PC-9 (cell line): ENCODE measurements at regions of chr2 and their contacts with region 1.

Region 1: DNA sequence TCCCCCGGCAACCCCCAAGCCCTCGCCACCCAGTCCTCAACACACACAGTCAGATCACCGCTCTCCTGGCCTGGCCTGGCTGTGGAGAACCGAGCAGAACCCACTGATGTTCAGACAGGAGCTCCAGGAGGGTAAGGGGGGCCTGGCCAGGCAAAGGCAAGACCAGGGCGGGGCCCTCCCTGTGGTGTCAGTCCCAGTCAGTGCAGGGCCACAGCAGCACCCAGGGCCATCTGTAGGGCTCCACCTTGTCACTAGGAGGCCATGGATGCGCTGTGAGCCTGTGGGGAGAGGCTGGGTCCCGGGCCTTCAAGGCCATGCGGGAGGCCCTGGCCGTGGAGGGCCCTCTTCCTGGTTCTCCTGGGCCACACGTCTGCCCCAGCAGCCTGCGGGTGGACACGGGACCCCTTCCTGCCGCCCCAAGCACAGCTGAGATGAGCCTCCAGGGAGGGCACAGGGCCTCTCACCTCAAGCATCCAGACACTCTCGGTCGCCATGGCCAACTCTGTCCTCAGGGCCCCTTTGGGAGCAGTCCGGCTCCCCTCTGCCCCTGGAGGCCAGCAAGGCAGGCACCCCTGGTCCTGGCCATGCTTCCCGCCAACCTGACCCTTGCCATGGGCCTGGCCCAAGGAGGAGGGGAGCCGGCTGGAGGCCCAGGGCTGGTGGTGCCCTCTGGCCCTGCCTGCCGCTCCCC is 2.0 kb downstream of the ANO7 start:
- DNase-seq: no peak
- H3K4me3 ChIP-seq: no peak overlapping the region
- H3K27ac ChIP-seq: no peak overlapping the region
- H3K4me1 ChIP-seq: no peaks in the 10 kb centered on the region
- H3K27me3 ChIP-seq: peaks cover 42% of the 10 kb centered on the region
- CTCF ChIP-seq: no peak

Region 2: GRCh38 chr2:240749516-240749915 is 440.9 kb before region 1 on chr2:
- CTCF ChIA-PET with region 1: no interaction called
- POLR2A ChIA-PET with region 1: interaction called, 20 read pairs
- intact Hi-C with region 1: no loop called
- DNase-seq: no peak
- H3K4me3 ChIP-seq: no peak overlapping the region
- H3K27ac ChIP-seq: no peak overlapping the region
- H3K4me1 ChIP-seq: no peaks in the 10 kb centered on the region
- H3K27me3 ChIP-seq: peaks cover 98% of the 10 kb centered on the region
- CTCF ChIP-seq: no peak

Region 3: GRCh38 chr2:240780023-240780700 is 410.3 kb before region 1 on chr2:
- CTCF ChIA-PET with region 1: no interaction called
- POLR2A ChIA-PET with region 1: no interaction called
- intact Hi-C with region 1: no loop called
- DNase-seq: no peak
- H3K4me3 ChIP-seq: no peak overlapping the region
- H3K27ac ChIP-seq: no peak overlapping the region
- H3K4me1 ChIP-seq: no peaks in the 10 kb centered on the region
- H3K27me3 ChIP-seq: peaks cover 62% of the 10 kb centered on the region
- CTCF ChIP-seq: no peak

Region 4: GRCh38 chr2:240881913-240882312 is 308.5 kb before region 1 on chr2:
- CTCF ChIA-PET with region 1: no interaction called
- POLR2A ChIA-PET with region 1: no interaction called
- intact Hi-C with region 1: no loop called
- DNase-seq: no peak
- H3K4me3 ChIP-seq: no peak overlapping the region
- H3K27ac ChIP-seq: no peak overlapping the region
- H3K4me1 ChIP-seq: no peaks in the 10 kb centered on the region
- H3K27me3 ChIP-seq: no peaks in the 10 kb centered on the region
- CTCF ChIP-seq: no peak

Region 5: GRCh38 chr2:241061275-241061674 is 129.2 kb before region 1 on chr2:
- CTCF ChIA-PET with region 1: no interaction called
- POLR2A ChIA-PET with region 1: no interaction called
- intact Hi-C with region 1: no loop called
- DNase-seq: peak in 1 of 2 experiments; percentile 86
- H3K4me3 ChIP-seq: no peak overlapping the region
- H3K27ac ChIP-seq: no peak overlapping the region
- H3K4me1 ChIP-seq: peaks cover 7% of the 10 kb centered on the region
- H3K27me3 ChIP-seq: no peaks in the 10 kb centered on the region
- CTCF ChIP-seq: no peak

Region 6: DNA sequence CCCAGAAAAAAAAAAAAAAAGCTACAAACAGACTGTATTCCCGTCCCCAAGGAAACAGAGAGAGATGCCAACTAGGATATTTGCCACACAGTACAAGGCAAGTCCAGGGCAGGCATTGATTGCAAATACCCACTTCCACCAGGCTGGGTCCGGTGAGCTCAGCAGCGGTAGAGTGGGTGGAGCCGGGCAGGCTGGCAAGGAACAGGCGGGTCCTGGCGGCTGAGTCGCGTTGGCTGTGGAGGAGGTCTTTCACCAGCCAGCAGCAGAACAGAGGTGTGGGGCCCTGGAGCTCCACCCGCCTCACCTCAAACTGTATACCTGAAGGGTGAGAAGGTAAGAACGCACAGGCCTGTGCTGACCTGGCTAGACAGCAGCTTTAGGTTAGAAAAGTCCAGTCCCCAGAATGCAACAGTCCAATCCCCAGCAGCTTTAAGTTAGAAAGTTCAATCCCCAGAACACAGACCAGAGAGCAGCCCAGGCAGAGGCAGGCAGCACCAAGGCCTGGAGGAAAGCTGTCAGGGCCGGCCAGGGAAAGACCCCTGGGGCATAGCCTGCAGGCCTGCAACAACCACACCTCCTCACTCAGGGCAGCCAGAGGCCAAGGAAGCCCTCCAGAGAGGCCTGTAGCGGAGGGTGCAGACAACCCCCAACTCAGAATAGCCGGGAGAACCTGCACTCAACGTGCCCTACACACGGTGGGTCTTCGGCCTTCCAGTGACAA is 66.5 kb before region 1 on chr2:
- CTCF ChIA-PET with region 1: no interaction called
- POLR2A ChIA-PET with region 1: no interaction called
- intact Hi-C with region 1: no loop called
- DNase-seq: peak in 1 of 2 experiments; percentile 41
- H3K4me3 ChIP-seq: no peak overlapping the region
- H3K27ac ChIP-seq: no peak overlapping the region
- H3K4me1 ChIP-seq: no peaks in the 10 kb centered on the region
- H3K27me3 ChIP-seq: no peaks in the 10 kb centered on the region
- CTCF ChIP-seq: no peak